Posterior vena cava (tissue), 2 donors: ENCODE measurements at regions of chr9 and their contacts with region 1.

Region 1: GRCh38 chr9:20823051-20823450 is 139.0 kb downstream of the FOCAD start:
- DNase-seq: no peak

Region 2: GRCh38 chr9:19665146-19665863 is 1157.7 kb before region 1 on chr9:
- intact Hi-C with region 1: loop called in 1 of 2 experiments (anchors 5 kb)
- DNase-seq: no peak

Region 3: DNA sequence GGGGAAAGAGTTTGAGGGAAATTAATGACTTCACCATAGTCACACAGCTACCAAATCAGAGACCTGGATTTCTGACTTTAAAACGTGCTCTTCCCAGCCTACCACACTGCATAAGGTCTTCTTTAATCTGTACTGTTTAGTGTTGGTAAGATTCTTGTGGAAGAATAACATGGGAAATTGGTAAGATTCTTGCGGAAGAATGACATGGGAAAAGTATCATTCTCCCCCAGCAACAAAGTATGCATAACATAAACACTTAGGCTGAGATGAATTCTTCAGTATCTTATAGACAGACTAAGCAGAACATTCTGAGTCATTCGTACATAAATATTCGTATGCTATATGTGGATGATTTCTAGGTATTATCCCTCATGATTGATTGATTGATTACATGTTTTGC is 31.4 kb after region 1 on chr9:
- intact Hi-C with region 1: no loop called
- DNase-seq: no peak